ENCODE measurements at regions of chr1 and their contacts with region 1.

Region 1: GRCh38 chr1:156445789-156446263 is 54.7 kb downstream of the MEF2D start:
- DNase-seq: peak; percentile 71 to 90
- ATAC-seq: peak; percentile 82 to 96 (median 94)
- H3K4me3 ChIP-seq: no peak overlapping the region
- H3K4me3 Mint-ChIP-seq: no peak overlapping the region
- H3K27ac ChIP-seq: no peak overlapping the region
- H3K27ac Mint-ChIP-seq: no peak overlapping the region
- H3K4me1 ChIP-seq: peaks cover 5% of the 10 kb centered on the region
- H3K4me1 Mint-ChIP-seq: no peaks in the 10 kb centered on the region
- H3K27me3 ChIP-seq: peaks cover 31% of the 10 kb centered on the region
- H3K27me3 Mint-ChIP-seq: peaks cover 46 to 52% of the 10 kb centered on the region in 2 donors
- CTCF ChIP-seq: peak; percentile 94

Region 2: DNA sequence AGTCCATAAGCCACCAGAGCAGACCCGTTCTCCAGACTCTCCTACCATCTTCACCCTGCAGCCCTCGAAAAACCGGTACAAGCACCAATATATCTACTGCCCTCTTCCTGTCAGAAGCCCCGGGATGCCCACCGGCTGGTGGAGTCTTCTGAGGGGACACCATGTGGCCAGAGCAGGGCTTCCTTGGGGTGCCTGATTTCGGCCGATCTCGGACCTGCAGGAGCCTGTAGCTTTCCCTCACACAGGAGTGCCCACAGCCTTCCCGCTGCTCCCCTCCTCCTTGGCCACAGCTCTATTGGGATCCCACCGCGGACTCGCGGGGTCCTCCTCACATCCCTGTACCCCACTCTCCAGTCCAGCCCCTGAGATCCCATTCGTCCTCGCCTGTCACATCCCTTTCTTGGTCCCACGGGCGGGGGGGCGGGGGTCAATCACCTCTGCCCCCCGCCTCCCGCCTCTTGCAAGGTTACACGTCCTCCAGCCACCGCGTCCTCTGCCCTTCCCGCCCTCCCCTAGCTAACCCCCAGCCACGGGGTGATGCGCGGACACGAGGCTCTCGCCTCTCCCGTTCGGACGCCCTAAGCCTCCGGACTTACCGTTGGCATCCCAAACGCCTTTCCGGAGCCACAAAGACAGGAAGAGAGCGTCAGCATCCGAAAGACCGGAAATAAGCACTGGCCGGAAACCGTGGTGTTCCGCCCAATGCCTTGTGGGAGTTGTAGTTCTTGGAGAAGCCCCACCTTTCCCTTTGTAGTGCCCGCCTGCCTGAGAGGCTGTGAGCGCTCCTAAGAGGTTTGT is 425.3 kb before region 1 on chr1 and contains the start of gene SSR2:
- intact Hi-C with region 1: no loop called
- DNase-seq: peak; percentile 71 to 93
- ATAC-seq: peak; percentile 98 to 100 (median 99)
- H3K4me3 ChIP-seq: peak within 1 kb of the TSS; percentile 64
- H3K4me3 Mint-ChIP-seq: peak within 1 kb of the TSS; percentile 80
- H3K27ac ChIP-seq: peak within 1 kb of the TSS; percentile 52
- H3K27ac Mint-ChIP-seq: peak within 1 kb of the TSS; percentile 76 to 92
- H3K4me1 ChIP-seq: peaks cover 13% of the 10 kb centered on the region
- H3K4me1 Mint-ChIP-seq: peaks cover 17 to 21% of the 10 kb centered on the region in 2 donors
- H3K27me3 ChIP-seq: no peaks in the 10 kb centered on the region
- H3K27me3 Mint-ChIP-seq: peaks cover 7% of the 10 kb centered on the region in 2 donors
- CTCF ChIP-seq: no peak
- total RNA-seq, gene SSR2: 209 to 215 (median 211) TPM

Region 3: GRCh38 chr1:156090822-156091188 is 355.0 kb before region 1 on chr1:
- intact Hi-C with region 1: loop called (anchors 5 kb)
- DNase-seq: peak; percentile 83 to 94
- ATAC-seq: peak; percentile 84 to 99 (median 95)
- H3K4me3 ChIP-seq: no peak overlapping the region
- H3K4me3 Mint-ChIP-seq: no peak overlapping the region
- H3K27ac ChIP-seq: no peak overlapping the region
- H3K27ac Mint-ChIP-seq: no peak overlapping the region
- H3K4me1 ChIP-seq: peaks cover 11% of the 10 kb centered on the region
- H3K4me1 Mint-ChIP-seq: peaks cover 0 to 10% of the 10 kb centered on the region in 2 donors
- H3K27me3 ChIP-seq: no peaks in the 10 kb centered on the region
- H3K27me3 Mint-ChIP-seq: peaks cover 11 to 12% of the 10 kb centered on the region in 2 donors
- CTCF ChIP-seq: peak; percentile 89

Region 4: GRCh38 chr1:156385534-156386031 is 60.2 kb before region 1 on chr1:
- intact Hi-C with region 1: loop called (anchors 1 kb)
- DNase-seq: peak; percentile 53 to 89
- ATAC-seq: peak; percentile 66 to 76 (median 73)
- H3K4me3 ChIP-seq: no peak overlapping the region
- H3K4me3 Mint-ChIP-seq: no peak overlapping the region
- H3K27ac ChIP-seq: no peak overlapping the region
- H3K27ac Mint-ChIP-seq: no peak overlapping the region
- H3K4me1 ChIP-seq: peaks cover 9% of the 10 kb centered on the region
- H3K4me1 Mint-ChIP-seq: peaks cover 8% of the 10 kb centered on the region in 2 donors
- H3K27me3 ChIP-seq: peaks cover 11% of the 10 kb centered on the region
- H3K27me3 Mint-ChIP-seq: peaks cover 20 to 32% of the 10 kb centered on the region in 2 donors
- CTCF ChIP-seq: peak; percentile 88